Activated B cell treated with CpG ODN at 0.5 μM for 24 hours (primary cell): ENCODE measurements at regions of chr4 and their contacts with region 1.

Region 1: GRCh38 chr4:42617030-42617429 is 39.9 kb downstream of the ATP8A1 start:
- DNase-seq: no peak
- ATAC-seq: no peak
- H3K4me3 Mint-ChIP-seq: no peak overlapping the region
- H3K27ac Mint-ChIP-seq: no peak overlapping the region
- H3K4me1 Mint-ChIP-seq: peaks cover 6% of the 10 kb centered on the region
- H3K27me3 Mint-ChIP-seq: no peaks in the 10 kb centered on the region
- CTCF ChIP-seq: no peak

Region 2: GRCh38 chr4:42603862-42604261 is 13.2 kb before region 1 on chr4:
- CTCF ChIA-PET with region 1: interaction called, 3 read pairs
- POLR2A ChIA-PET with region 1: no interaction called
- intact Hi-C with region 1: loop called (anchors 2 kb)
- DNase-seq: no peak
- ATAC-seq: no peak
- H3K4me3 Mint-ChIP-seq: no peak overlapping the region
- H3K27ac Mint-ChIP-seq: no peak overlapping the region
- H3K4me1 Mint-ChIP-seq: peaks cover 6% of the 10 kb centered on the region
- H3K27me3 Mint-ChIP-seq: no peaks in the 10 kb centered on the region
- CTCF ChIP-seq: no peak